OCI-LY7 (cell line): ENCODE measurements at regions of chr1 and their contacts with region 1.

Region 1: DNA sequence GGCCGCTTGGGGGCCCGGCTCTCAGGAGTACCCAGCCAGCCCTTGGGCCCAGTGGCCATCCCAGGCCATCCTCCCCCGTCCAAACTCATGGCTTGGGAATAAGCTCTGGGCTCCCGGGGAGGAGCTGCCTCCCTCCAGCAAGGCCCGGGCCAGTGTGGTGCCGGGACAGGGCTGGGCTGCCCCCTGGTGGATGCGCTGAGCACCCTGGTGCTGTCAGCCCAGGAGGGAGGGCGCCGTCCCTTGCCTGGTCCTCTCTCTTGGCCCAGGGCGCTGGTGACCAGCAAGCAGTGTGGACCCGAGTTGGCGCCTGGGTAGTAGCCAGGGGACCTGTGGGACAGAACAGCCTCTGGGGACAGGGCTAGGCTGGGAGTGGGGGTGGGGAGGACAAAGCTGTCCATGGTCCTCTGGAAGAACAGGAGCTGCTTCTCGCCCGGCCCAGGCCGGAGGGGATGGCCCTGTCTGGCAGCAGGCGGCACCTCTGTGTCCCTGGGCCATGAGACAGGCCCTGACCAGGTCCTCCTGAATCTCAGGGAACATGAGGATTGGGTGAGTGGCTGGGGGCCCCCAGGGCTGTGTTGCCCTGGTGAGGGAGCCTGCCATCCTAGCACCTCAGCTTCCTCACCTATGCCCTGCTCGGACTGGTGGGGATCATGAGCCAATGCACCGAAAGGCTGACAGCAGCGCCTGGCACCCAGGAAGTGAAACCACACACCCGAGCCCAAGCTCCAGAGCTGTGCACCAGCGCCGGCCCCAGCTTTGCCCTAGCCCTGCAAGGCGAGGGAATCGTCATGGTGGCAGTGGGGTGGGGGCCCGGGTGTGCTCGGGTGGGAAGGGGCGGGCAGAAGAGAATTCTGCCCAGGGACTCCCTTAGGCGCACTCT is 9.4 kb downstream of the MORN1 start:
- DNase-seq: peak; percentile 66
- H3K4me3 ChIP-seq: no peak overlapping the region
- H3K27ac ChIP-seq: no peak overlapping the region
- H3K4me1 ChIP-seq: no peaks in the 10 kb centered on the region
- CTCF ChIP-seq: peak; percentile 90

Region 2: GRCh38 chr1:2194898-2195673 is 186.9 kb before region 1 on chr1:
- CTCF ChIA-PET with region 1: interaction called, 4 read pairs
- POLR2A ChIA-PET with region 1: interaction called, 3 read pairs
- intact Hi-C with region 1: loop called (anchors 1 kb)
- DNase-seq: peak; percentile 87
- H3K4me3 ChIP-seq: peak overlapping the region; percentile 67
- H3K27ac ChIP-seq: peak overlapping the region; percentile 52
- H3K4me1 ChIP-seq: peaks cover 23% of the 10 kb centered on the region
- CTCF ChIP-seq: peak; percentile 91

Region 3: DNA sequence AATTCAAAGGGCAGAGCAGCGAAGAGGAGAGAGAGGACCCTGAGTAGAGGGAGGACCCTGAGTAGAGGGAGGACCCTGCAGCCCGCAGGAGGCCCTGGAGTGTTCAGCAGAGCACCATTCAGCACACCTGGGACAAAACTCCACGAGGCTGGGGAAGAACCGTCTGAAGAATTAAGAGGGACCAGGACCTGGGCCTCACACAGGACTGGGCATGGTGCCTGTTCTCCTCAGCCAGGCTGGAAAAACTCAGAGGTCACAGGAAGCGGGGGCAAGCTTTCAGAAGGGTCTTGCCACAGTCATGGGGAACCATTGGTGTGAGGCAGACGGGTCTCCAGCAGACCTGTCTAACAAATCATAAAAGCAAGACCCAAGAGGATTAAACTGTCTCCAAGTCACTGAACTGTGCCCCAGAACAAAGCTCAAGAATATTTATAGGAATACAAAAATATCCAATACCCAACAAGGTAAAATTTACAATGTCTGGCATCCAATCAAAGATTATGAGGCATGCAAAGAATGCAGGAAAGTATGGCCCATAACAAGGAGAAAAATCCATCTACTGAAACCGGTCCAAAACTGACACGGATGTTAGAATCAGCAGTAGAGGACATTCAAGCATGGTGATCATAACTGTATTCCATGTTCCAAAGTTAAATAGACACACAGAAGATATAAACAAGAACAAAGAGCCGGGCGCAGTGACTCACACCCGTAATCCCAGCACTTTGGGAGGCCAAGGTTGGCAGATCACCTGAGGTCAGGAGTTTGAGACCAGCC is 21.2 kb before region 1 on chr1:
- CTCF ChIA-PET with region 1: no interaction called
- POLR2A ChIA-PET with region 1: no interaction called
- intact Hi-C with region 1: no loop called
- DNase-seq: no peak
- H3K4me3 ChIP-seq: no peak overlapping the region
- H3K27ac ChIP-seq: no peak overlapping the region
- H3K4me1 ChIP-seq: no peaks in the 10 kb centered on the region
- CTCF ChIP-seq: no peak